IMR-90 (cell line): ENCODE measurements at regions of chr2 and their contacts with region 1.

Region 1: DNA sequence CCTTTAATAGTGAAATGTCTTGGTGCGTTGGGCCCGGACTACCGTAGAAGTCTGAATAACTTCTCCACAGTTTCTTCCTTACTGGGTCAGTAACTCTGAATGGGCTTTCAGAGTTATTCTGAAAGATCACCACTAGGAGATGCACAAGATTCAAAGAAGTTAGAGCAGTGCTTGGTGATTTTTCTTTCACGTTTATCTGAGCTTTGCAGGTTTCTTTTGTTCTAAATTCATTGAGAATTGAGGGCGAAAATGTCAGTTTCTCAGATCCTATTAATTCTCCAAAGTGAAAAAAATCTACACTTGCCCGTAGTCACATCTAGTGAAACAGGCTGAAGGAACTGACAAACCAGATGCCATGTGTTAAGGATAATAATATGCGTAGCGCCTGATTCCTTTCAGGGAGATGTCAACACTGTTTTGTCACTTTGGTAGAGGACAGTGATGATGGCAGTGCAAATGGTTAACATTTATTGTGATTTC is 70.1 kb downstream of the QPCT start:
- DNase-seq: peak; percentile 81
- ATAC-seq: peak; percentile 84
- H3K4me3 ChIP-seq: no peak overlapping the region
- H3K27ac ChIP-seq: no peak overlapping the region
- H3K4me1 ChIP-seq: peaks cover 11% of the 10 kb centered on the region
- H3K27me3 ChIP-seq: no peaks in the 10 kb centered on the region
- CTCF ChIP-seq: peak; percentile 96
- POLR2A ChIP-seq: no peak
- RAD21 ChIP-seq: peak; percentile 97

Region 2: DNA sequence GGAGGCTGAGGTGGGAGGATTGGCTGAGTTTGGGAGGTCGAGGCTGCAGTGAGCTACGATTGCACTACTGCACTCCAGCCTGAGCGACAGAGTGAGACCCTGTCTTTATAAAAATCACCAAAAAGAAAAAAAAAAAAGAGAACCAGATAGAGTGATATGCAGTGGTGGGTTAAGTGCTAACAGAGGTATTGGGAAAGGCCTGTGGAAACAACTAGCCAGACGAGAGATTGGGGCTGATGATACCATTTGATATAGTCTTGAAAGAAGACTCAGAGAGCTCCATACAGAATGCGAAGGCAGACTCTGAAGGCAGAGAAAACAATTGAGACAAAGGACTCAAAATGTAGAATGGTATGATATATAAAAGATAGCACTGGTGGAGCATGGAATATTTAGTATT is 122.8 kb after region 1 on chr2:
- CTCF ChIA-PET with region 1: interaction called, 3 read pairs
- POLR2A ChIA-PET with region 1: no interaction called
- dilution Hi-C with region 1: no loop called
- in situ Hi-C with region 1: no loop called
- intact Hi-C with region 1: loop called (anchors 5 kb)
- DNase-seq: no peak
- ATAC-seq: no peak
- H3K4me3 ChIP-seq: no peak overlapping the region
- H3K27ac ChIP-seq: no peak overlapping the region
- H3K4me1 ChIP-seq: peaks cover 1% of the 10 kb centered on the region; the same call in 1 of the 2 replicates
- H3K27me3 ChIP-seq: no peaks in the 10 kb centered on the region
- CTCF ChIP-seq: no peak
- POLR2A ChIP-seq: no peak
- RAD21 ChIP-seq: no peak

Region 3: DNA sequence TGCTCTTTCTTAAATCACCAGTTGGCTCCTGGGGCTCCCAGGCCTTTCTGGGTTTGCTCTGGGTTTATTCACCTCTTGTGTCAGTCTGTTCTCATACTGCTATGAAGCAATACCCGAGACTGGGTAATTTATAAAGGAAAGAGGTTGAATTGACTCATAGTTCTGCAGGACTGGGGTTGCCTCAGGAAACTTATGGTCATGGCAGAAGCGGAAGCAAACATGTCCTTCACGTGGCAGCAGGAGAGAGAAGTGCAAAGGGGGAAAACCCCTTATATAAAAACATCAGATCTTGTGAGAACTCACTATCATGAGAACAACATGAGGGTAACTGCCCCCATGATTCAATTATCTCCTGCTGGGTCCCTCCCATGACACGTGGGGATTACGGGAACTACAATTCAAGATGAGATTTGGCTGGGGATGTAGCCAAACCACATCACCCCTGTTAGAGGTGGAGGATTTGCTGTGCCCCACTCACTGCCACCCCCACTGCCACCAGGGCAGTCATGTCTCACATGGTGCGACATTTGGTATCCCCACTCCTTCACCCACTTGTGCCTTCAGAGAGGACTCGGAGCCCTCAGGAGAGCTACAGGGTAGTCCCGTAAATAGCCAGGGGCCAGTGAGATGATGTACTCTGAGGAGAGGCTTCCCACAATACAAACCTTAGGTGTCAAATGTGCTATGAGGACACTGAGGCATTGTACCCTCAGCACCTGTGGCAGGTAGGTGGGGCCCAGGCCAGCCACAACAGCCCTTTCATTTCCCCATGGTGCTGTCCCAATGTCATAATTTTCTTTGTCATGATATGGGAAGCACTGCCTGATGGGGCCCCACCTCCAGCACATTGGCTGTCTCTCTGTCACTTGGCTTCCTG is 221.2 kb after region 1 on chr2:
- CTCF ChIA-PET with region 1: interaction called, 5 read pairs
- POLR2A ChIA-PET with region 1: no interaction called
- dilution Hi-C with region 1: no loop called
- in situ Hi-C with region 1: no loop called
- intact Hi-C with region 1: loop called (anchors 1 kb)
- DNase-seq: peak; percentile 82
- ATAC-seq: no peak
- H3K4me3 ChIP-seq: no peak overlapping the region
- H3K27ac ChIP-seq: no peak overlapping the region
- H3K4me1 ChIP-seq: peaks cover 12% of the 10 kb centered on the region
- H3K27me3 ChIP-seq: no peaks in the 10 kb centered on the region
- CTCF ChIP-seq: no peak
- POLR2A ChIP-seq: no peak
- RAD21 ChIP-seq: no peak

Region 4: GRCh38 chr2:37672104-37672869 is 257.8 kb after region 1 on chr2:
- CTCF ChIA-PET with region 1: interaction called, 3 read pairs
- POLR2A ChIA-PET with region 1: no interaction called
- dilution Hi-C with region 1: no loop called
- in situ Hi-C with region 1: no loop called
- intact Hi-C with region 1: loop called (anchors 1 kb)
- DNase-seq: peak; percentile 88
- ATAC-seq: peak; percentile 53
- H3K4me3 ChIP-seq: peak overlapping the region; percentile 99
- H3K27ac ChIP-seq: peak overlapping the region; percentile 87
- H3K4me1 ChIP-seq: peaks cover 7% of the 10 kb centered on the region
- H3K27me3 ChIP-seq: no peaks in the 10 kb centered on the region
- CTCF ChIP-seq: no peak
- POLR2A ChIP-seq: no peak
- RAD21 ChIP-seq: no peak; the same call in 1 of the 2 replicates

Region 5: DNA sequence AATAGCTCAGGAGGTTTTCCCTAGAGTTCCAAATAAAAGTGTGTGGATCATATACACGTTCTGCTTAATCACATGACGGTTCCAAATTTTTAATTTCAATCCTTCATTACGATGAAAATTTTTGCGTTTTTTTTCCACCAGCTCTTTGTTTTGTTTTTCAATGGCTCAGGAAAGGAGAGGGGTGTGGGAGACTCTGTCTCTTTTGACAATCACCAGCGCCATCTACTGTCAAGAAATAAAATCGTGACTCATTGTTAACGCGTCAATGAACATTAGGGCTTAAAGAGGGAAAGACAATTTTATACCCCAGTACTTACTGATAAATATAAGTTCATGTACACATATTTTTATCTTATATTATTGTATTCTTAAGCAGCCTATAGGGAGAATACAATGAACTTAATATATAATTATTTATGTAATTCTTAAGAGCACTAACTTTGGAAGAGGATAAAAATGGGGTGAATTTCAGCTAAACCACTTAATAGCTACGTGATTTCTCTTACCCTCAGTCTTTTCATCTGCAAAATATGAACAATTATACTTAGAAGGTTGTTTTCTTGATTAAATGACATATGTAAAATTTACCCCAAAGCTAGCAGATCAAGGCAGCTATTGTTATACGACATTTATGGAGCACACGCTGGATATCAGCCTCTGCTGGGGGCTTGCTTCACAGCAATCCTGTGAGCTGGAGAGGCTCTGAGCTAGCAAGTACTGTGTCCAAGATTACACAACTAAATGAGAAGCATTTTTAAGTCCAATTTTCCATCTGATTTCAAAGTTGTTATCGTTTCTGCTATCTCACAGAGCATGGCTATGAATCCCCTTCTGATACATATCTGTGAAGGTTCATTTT is 463.2 kb after region 1 on chr2:
- CTCF ChIA-PET with region 1: interaction called, 33 read pairs
- POLR2A ChIA-PET with region 1: interaction called, 7 read pairs
- dilution Hi-C with region 1: no loop called
- in situ Hi-C with region 1: no loop called
- intact Hi-C with region 1: loop called (anchors 1 kb)
- DNase-seq: peak; percentile 68
- ATAC-seq: peak; percentile 93
- H3K4me3 ChIP-seq: no peak overlapping the region
- H3K27ac ChIP-seq: no peak overlapping the region
- H3K4me1 ChIP-seq: no peaks in the 10 kb centered on the region
- H3K27me3 ChIP-seq: peaks cover 4% of the 10 kb centered on the region; the same call in 1 of the 2 replicates
- CTCF ChIP-seq: peak; percentile 82
- POLR2A ChIP-seq: no peak
- RAD21 ChIP-seq: peak; percentile 95